GM10248 (cell line): ENCODE measurements at regions of chr11 and their contacts with region 1.

Region 1: DNA sequence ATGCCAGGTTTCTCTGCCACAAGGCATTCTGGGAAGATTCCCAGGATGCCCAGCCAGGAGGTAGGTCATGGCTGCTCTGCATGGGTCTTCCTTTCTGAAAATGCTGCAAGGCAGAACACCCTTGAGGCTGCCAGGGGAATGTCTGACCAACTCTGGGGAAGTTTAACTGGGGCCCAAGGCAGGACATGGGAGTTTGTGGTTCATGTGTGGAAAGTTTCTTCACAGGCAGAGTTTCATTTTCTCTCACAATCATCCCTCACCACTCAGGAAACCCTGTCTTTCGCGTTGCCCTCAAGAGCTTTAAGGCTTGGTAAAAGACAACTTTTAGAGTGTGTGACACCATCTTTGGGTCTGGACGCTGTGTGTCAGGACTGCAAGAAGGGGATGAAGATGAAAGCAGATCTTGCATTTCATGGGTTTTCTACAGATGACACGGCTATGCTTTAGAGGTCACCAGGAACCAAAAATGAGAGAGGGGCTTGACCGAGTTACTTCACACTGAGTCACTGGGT is 133.5 kb downstream of the CD44 start:
- DNase-seq: peak; percentile 68
- CTCF ChIP-seq: no peak

Region 2: GRCh38 chr11:35288817-35289541 is 16.5 kb after region 1 on chr11:
- CTCF ChIA-PET with region 1: interaction called, 11 read pairs
- POLR2A ChIA-PET with region 1: no interaction called
- DNase-seq: no peak
- CTCF ChIP-seq: no peak

Region 3: GRCh38 chr11:35412285-35412684 is 139.8 kb after region 1 on chr11:
- CTCF ChIA-PET with region 1: no interaction called
- POLR2A ChIA-PET with region 1: no interaction called
- DNase-seq: no peak
- CTCF ChIP-seq: peak; percentile 41